Tibial artery (tissue), 4 donors: ENCODE measurements at regions of chr7 and their contacts with region 1.

Region 1: DNA sequence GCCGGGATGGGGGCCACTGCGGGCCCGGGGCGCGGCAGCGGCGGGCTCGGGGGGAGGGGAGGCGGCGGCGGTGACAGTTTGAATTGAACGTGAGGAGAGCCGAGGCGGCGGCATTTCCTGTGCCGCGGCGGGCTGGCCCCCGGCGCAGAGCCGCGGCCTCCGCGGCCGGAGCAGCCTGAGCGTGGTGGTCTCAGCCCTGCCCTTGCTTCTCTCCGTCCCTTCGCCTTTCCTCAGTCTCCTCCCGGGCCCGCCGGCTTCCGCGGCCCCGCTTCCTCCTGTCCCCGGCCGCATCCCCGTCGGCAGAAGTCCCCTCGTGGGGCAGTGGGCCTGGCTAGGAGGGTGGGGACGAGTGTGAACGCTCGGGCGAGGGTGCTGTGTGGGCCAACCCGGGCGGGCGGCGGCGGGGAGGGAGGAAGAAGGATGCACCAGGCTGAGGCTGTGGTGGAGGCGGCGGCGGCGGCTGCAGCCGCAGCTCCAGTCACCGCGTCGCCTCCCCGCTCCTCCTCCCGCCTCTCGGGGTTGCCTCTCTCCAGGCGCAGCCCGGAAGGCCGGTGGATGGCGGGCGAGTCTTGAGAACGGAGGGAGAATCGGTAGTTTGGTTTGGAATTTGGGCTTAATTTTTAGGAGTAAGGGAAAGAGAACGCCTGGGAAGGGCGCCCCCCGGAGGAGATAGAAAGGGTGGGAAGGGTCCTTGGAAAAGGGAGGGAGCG is 690 bp downstream of the SEPTIN7 start:
- DNase-seq: peak; percentile 74 to 86
- H3K4me3 ChIP-seq: peak overlapping the region; percentile 94 to 96
- H3K27ac ChIP-seq: peak overlapping the region; percentile 97 to 98
- H3K4me1 ChIP-seq: peaks cover 5 to 48% (median 26%) of the 10 kb centered on the region in 4 donors
- H3K27me3 ChIP-seq: no peaks in the 10 kb centered on the region
- CTCF ChIP-seq: peak; percentile 44 to 59

Region 2: DNA sequence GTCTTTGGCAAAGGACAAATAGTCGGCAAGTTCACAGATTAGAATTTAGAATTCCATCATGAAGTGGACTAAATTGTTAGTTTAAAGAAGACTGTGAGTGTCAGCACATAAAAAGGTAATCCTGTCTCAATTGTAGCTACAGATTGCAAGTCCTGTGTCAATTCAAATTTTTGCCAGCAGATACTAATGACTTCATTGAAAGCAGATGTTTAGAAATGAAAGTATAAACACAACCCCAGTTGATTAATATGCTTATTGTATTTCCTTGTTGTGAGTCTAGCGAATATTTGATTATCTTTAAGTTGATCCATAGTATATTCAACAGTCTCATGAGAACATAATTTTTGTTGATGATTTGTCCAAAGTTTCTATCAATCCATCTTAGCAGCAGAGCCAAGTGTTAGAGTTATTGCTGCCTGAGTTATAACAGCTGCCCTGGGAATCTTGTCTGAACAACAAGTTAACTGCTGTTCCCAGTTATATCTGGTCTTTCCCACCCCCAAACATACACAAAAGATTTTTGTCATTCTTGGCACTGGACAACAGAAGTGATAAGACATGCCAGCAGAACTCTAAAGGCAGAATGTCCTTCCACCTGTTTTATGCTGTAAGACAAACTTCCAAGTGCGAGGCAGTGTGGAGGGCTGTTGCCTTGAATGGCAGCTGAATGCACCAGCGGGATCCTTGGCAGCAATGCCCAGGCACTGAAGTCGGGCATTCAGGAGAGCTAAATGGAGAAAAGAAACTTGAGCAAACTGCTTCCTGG is 85.3 kb before region 1 on chr7:
- intact Hi-C with region 1: loop called (anchors 5 kb)
- DNase-seq: peak in 1 of 2 donors; percentile 81
- H3K4me3 ChIP-seq: peak overlapping the region; percentile 25 to 33
- H3K27ac ChIP-seq: peak overlapping the region; percentile 69 to 72
- H3K4me1 ChIP-seq: peaks cover 0 to 26% (median 15%) of the 10 kb centered on the region in 4 donors
- H3K27me3 ChIP-seq: no peaks in the 10 kb centered on the region
- CTCF ChIP-seq: no peak

Region 3: DNA sequence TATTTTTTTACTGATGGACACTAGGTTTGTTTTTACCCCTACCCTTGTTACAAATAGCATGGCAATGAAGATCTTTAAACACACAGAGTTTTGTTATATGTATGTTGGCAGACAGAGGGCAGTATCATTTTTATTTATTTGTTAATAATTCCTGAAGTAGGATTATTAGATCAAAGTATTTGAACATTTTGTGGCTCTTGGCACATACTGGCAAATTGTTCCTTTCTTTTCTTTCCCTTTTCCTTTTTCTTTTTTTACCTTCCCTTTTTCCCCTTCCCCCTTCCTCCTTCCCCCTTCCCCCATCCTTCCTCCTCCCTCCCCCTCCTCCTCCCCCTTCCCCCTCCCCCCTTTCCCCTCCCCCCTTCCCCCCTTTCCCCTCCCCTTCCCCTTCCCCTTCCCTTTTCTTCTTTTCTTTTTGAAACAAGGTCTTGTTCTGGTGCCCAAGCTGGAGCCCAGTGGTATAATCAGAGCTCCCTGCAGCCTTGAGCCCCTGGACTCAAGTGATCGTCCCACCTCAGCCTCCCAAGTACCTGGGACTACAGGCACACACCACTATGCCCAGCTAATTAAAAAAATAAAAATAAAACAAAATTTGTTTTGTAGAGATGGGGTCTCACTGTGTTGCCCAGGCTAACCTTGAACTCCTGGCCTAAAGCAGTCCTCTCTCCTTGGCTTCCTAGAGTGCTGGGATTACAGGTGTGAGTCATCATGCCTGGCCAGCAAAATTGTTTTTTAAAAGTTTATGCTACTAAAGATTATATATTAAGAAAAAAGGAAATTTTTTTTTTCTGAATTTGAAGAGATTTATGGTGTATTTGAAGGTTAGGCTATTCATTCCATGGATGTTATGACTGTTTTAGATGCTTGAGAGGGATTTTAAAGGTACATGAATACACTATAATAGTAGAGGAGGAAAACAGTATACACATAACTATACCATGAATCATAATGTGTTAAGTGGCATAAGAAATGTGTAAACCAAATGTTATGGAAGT is 38.6 kb after region 1 on chr7:
- intact Hi-C with region 1: no loop called
- DNase-seq: no peak
- H3K4me3 ChIP-seq: no peak overlapping the region
- H3K27ac ChIP-seq: no peak overlapping the region
- H3K4me1 ChIP-seq: peaks cover 0 to 50% (median 3%) of the 10 kb centered on the region in 4 donors
- H3K27me3 ChIP-seq: no peaks in the 10 kb centered on the region
- CTCF ChIP-seq: no peak

Region 4: DNA sequence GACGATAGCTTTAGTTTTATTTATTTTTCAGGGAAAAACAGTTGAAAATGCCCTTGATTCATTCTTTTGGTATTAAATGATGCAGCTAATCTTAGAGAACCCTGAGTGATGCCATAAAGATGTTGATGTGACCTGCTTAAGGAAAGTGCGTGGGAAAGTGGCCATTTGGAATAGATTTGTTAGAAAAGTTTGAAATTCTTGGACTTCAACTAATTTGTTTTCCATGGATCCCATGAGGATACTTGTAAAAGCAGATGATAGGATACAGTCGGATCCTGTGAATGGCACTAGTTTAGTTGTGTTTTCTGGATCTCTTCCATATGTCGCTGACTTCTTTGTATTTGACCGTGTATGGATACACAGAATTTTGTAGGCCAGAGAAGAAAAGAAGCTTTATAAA is 68.3 kb after region 1 on chr7:
- intact Hi-C with region 1: loop called (anchors 10 kb)
- DNase-seq: no peak
- H3K4me3 ChIP-seq: no peak overlapping the region
- H3K27ac ChIP-seq: peak overlapping the region; percentile 51 to 63
- H3K4me1 ChIP-seq: peaks cover 0 to 71% (median 10%) of the 10 kb centered on the region in 4 donors
- H3K27me3 ChIP-seq: no peaks in the 10 kb centered on the region
- CTCF ChIP-seq: no peak